Naive thymus-derived CD4-positive, alpha-beta T cell (primary cell): ENCODE measurements at regions of chr5 and their contacts with region 1.

Region 1: GRCh38 chr5:149434162-149435014 is 55.3 kb upstream of the IL17B start:
- DNase-seq: peak in 8 of 9 donors; percentile 15 to 55 (median 43)
- ATAC-seq: peak; percentile 58
- H3K4me3 ChIP-seq: no peak overlapping the region
- H3K4me3 Mint-ChIP-seq: no peak overlapping the region
- H3K27ac ChIP-seq: no peak overlapping the region
- H3K27ac Mint-ChIP-seq: no peak overlapping the region
- H3K4me1 ChIP-seq: peaks cover 0 to 6% of the 10 kb centered on the region in 2 donors
- H3K4me1 Mint-ChIP-seq: peaks cover 0 to 26% (median 8%) of the 10 kb centered on the region in 7 donors
- H3K27me3 ChIP-seq: no peaks in the 10 kb centered on the region
- H3K27me3 Mint-ChIP-seq: no peaks in the 10 kb centered on the region

Region 2: DNA sequence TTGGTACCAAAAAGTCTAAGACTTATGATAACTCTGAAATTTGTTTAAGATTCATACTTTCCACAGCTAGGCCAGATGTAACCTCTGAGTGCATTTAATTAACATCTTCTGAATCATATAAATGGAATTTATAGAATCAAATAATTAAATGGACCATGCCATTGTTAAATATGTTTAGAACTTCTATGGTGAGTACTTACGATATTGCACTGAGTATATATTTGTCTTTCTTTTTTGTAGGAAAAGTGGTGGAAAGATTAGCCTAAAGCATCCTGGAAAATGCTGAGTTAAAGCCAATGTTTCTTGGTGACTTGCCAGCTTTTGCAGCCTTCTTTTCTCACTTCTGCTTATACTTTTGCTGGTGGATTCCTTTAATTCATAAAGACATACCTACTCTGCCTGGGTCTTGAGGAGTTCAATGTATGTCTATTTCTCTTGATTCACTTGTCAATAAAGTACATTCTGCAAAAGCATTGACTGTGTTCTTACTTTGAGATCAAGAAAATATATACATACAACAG is 1219.7 kb before region 1 on chr5:
- CTCF ChIA-PET with region 1: no interaction called
- POLR2A ChIA-PET with region 1: no interaction called
- intact Hi-C with region 1: no loop called
- DNase-seq: no peak
- ATAC-seq: no peak
- H3K4me3 ChIP-seq: no peak overlapping the region
- H3K4me3 Mint-ChIP-seq: no peak overlapping the region
- H3K27ac ChIP-seq: no peak overlapping the region
- H3K27ac Mint-ChIP-seq: no peak overlapping the region
- H3K4me1 ChIP-seq: no peaks in the 10 kb centered on the region
- H3K4me1 Mint-ChIP-seq: no peaks in the 10 kb centered on the region
- H3K27me3 ChIP-seq: no peaks in the 10 kb centered on the region
- H3K27me3 Mint-ChIP-seq: peaks cover 0 to 11% (median 3%) of the 10 kb centered on the region in 5 donors

Region 3: GRCh38 chr5:149317281-149318048 is 116.9 kb before region 1 on chr5:
- CTCF ChIA-PET with region 1: interaction called, 10 read pairs
- POLR2A ChIA-PET with region 1: interaction called, 4 read pairs
- intact Hi-C with region 1: loop called (anchors 1 kb)
- DNase-seq: peak in 7 of 9 donors; percentile 18 to 66 (median 57)
- ATAC-seq: peak; percentile 77
- H3K4me3 ChIP-seq: no peak overlapping the region
- H3K4me3 Mint-ChIP-seq: no peak overlapping the region
- H3K27ac ChIP-seq: no peak overlapping the region
- H3K27ac Mint-ChIP-seq: peak overlapping the region in 1 of 9 donors; percentile 4
- H3K4me1 ChIP-seq: peaks cover 0 to 3% of the 10 kb centered on the region in 2 donors
- H3K4me1 Mint-ChIP-seq: peaks cover 0 to 5% (median 4%) of the 10 kb centered on the region in 7 donors
- H3K27me3 ChIP-seq: no peaks in the 10 kb centered on the region
- H3K27me3 Mint-ChIP-seq: no peaks in the 10 kb centered on the region

Region 4: GRCh38 chr5:149381987-149382340 is 52.4 kb before region 1 on chr5:
- CTCF ChIA-PET with region 1: interaction called, 6 read pairs
- POLR2A ChIA-PET with region 1: no interaction called
- intact Hi-C with region 1: loop called (anchors 1 kb)
- DNase-seq: peak; percentile 41 to 76 (median 62)
- ATAC-seq: peak; percentile 85
- H3K4me3 ChIP-seq: no peak overlapping the region
- H3K4me3 Mint-ChIP-seq: peak overlapping the region in 1 of 10 donors; percentile 46
- H3K27ac ChIP-seq: no peak overlapping the region
- H3K27ac Mint-ChIP-seq: no peak overlapping the region
- H3K4me1 ChIP-seq: no peaks in the 10 kb centered on the region
- H3K4me1 Mint-ChIP-seq: peaks cover 0 to 5% (median 4%) of the 10 kb centered on the region in 7 donors
- H3K27me3 ChIP-seq: no peaks in the 10 kb centered on the region
- H3K27me3 Mint-ChIP-seq: no peaks in the 10 kb centered on the region